ENCODE measurements at regions of chr17 and their contacts with region 1.

Region 1: DNA sequence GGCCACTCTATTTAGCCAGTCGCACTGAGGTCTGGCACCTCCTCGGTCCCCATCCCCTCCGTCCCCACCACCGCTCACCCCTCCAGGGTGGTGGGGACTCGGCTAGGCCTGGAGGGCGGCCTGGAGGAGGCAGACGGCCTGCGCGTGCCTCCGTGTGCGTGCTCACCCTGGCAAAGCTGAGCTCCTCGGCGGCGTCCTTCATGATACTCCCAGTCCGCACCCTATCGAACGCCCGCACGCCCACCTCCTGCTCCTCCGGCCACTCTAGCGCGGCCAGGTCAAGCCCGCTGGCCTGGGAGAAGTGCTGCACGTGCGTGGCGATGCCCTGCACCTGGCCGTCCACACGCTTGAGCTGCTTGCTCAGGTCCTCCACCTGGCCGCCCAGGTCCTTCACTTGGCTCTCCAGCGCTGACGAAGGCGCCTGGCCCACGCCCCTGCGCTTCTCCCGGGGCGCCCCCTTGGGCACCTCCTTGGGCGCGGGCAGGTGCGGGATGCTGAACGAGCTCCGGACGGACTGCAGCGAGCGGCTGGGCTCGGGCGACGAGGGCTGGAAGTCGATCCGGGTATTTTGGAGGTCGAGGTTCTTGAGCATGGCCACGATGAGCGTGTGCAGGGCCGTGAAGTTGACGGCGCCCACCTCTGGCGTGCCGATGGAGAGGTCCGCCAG is 644 bp downstream of the QRICH2 start:
- DNase-seq: no peak
- ATAC-seq: no peak
- H3K4me3 ChIP-seq: no peak overlapping the region
- H3K27ac ChIP-seq: no peak overlapping the region
- H3K4me1 ChIP-seq: 0 out of 2 replicates have a peak, but pooled peaks cover 7% of the 10 kb centered on the region
- H3K27me3 ChIP-seq: no peaks in the 10 kb centered on the region
- CTCF ChIP-seq: no peak

Region 2: DNA sequence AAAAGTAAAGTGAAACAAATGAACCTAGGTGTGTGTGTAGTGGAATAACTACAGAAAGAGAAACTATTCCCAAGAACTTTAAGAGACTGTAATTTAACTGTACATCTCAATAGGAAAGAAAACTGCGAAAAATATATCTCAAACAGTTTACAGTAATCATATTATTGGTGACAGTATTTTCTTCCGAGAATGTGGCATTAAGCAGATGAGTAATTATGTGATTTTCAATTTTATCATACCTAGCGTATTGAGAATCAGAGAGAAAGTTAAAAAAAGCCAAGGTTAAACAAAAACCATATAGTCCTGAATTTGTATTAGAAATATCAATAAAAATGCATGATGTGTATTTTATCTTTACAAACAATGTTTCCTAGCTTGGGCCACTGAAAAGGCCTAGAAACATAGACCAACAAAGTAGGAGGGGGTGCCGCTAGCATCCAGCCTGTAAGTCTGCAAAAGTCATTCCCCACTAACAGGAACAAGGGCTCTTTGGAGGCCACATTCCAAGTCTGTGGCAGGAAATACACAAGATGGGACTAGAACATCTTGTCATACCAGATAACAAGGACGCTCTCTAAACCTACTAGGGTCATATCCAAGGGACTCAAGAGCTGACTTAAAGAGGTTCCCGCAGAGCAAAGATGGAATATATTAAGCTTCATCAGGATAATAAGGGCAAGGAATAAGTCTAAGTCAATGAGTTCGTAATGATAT is 87.6 kb before region 1 on chr17:
- CTCF ChIA-PET with region 1: interaction called, 12 read pairs
- POLR2A ChIA-PET with region 1: no interaction called
- intact Hi-C with region 1: no loop called
- DNase-seq: no peak
- ATAC-seq: no peak
- H3K4me3 ChIP-seq: no peak overlapping the region
- H3K27ac ChIP-seq: no peak overlapping the region
- H3K4me1 ChIP-seq: no peaks in the 10 kb centered on the region
- H3K27me3 ChIP-seq: no peaks in the 10 kb centered on the region
- CTCF ChIP-seq: no peak

Region 3: GRCh38 chr17:76446449-76447231 is 139.2 kb after region 1 on chr17:
- CTCF ChIA-PET with region 1: no interaction called
- POLR2A ChIA-PET with region 1: no interaction called
- intact Hi-C with region 1: no loop called
- DNase-seq: peak; percentile 98
- ATAC-seq: peak; percentile 93
- H3K4me3 ChIP-seq: peak overlapping the region; percentile 62
- H3K27ac ChIP-seq: peak overlapping the region; percentile 93
- H3K4me1 ChIP-seq: peaks cover 86% of the 10 kb centered on the region
- H3K27me3 ChIP-seq: no peaks in the 10 kb centered on the region
- CTCF ChIP-seq: no peak